Stomach (tissue), 19 donors: ENCODE measurements at regions of chr21 and their contacts with region 1.

Region 1: GRCh38 chr21:17195976-17196375 is 316.9 kb upstream of the CXADR start:
- DNase-seq: peak in 1 of 2 donors; percentile 73
- H3K4me3 ChIP-seq: no peak overlapping the region
- H3K27ac ChIP-seq: no peak overlapping the region
- H3K4me1 ChIP-seq: peaks cover 0 to 11% (median 2%) of the 10 kb centered on the region in 4 donors
- H3K27me3 ChIP-seq: no peaks in the 10 kb centered on the region
- CTCF ChIP-seq: no peak
- EP300 ChIP-seq: no peak
- POLR2A ChIP-seq: no peak

Region 2: GRCh38 chr21:16968436-16968835 is 227.5 kb before region 1 on chr21:
- intact Hi-C with region 1: no loop called
- DNase-seq: no peak
- H3K4me3 ChIP-seq: no peak overlapping the region
- H3K27ac ChIP-seq: no peak overlapping the region
- H3K4me1 ChIP-seq: no peaks in the 10 kb centered on the region
- H3K27me3 ChIP-seq: no peaks in the 10 kb centered on the region
- CTCF ChIP-seq: no peak
- EP300 ChIP-seq: no peak
- POLR2A ChIP-seq: no peak

Region 3: GRCh38 chr21:17032141-17032655 is 163.8 kb before region 1 on chr21:
- intact Hi-C with region 1: no loop called
- DNase-seq: no peak
- H3K4me3 ChIP-seq: no peak overlapping the region
- H3K27ac ChIP-seq: no peak overlapping the region
- H3K4me1 ChIP-seq: no peaks in the 10 kb centered on the region
- H3K27me3 ChIP-seq: no peaks in the 10 kb centered on the region
- CTCF ChIP-seq: no peak
- EP300 ChIP-seq: no peak
- POLR2A ChIP-seq: no peak

Region 4: DNA sequence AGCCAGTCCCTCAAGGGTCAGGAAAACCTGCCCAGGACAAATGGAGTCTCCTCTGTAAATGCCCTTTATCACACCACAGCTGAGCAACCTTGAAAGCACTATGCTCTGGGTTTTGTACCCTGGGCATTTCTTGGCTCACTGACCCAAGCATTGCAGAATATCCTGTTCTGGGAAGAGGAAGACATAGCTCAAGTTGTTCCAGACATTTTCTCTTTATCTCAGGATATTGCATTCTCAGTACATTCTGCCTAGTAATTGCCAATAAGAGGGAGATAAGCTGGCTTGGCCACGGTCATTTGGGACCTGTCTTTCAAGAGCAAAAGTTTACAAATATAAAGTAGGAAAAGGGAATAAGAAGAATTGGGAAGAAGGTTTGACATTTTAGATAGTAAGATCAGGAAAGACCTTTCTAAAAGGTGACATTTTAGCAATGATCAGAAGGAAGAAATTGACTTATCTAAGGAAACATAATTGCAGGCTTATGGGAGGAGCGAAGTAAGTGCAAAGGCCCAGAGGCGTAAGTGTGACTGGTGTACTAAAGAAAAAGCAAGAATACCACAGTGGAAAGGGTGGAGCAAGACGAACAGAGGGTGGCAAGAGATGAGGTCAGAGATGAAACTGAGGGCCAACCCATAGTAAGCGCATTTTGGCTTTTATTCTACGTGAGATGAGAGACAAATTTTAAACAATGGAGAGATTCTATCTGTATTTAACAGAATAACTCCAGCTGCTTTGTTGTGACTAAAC is 77.2 kb before region 1 on chr21:
- intact Hi-C with region 1: no loop called
- DNase-seq: no peak
- H3K4me3 ChIP-seq: no peak overlapping the region
- H3K27ac ChIP-seq: no peak overlapping the region
- H3K4me1 ChIP-seq: no peaks in the 10 kb centered on the region
- H3K27me3 ChIP-seq: no peaks in the 10 kb centered on the region
- CTCF ChIP-seq: no peak
- EP300 ChIP-seq: no peak
- POLR2A ChIP-seq: no peak

Region 5: GRCh38 chr21:17250778-17251241 is 54.8 kb after region 1 on chr21:
- intact Hi-C with region 1: loop called (anchors 10 kb)
- DNase-seq: peak in 1 of 2 donors; percentile 59
- H3K4me3 ChIP-seq: no peak overlapping the region
- H3K27ac ChIP-seq: no peak overlapping the region
- H3K4me1 ChIP-seq: no peaks in the 10 kb centered on the region
- H3K27me3 ChIP-seq: no peaks in the 10 kb centered on the region
- CTCF ChIP-seq: no peak
- EP300 ChIP-seq: no peak
- POLR2A ChIP-seq: no peak